Naive thymus-derived CD4-positive, alpha-beta T cell (primary cell): ENCODE measurements at regions of chr1 and their contacts with region 1.

Region 1: GRCh38 chr1:43974443-43975248 is at the start of gene ATP6V0B:
- DNase-seq: peak; percentile 83 to 98 (median 90)
- ATAC-seq: peak; percentile 85
- H3K4me3 ChIP-seq: peak within 1 kb of the TSS; percentile 93
- H3K4me3 Mint-ChIP-seq: peak within 1 kb of the TSS; percentile 88 to 98 (median 94)
- H3K27ac ChIP-seq: peak within 1 kb of the TSS; percentile 91
- H3K27ac Mint-ChIP-seq: peak within 1 kb of the TSS; percentile 90 to 99 (median 94)
- H3K4me1 ChIP-seq: peaks cover 27 to 29% of the 10 kb centered on the region in 2 donors
- H3K4me1 Mint-ChIP-seq: peaks cover 51 to 69% (median 58%) of the 10 kb centered on the region in 7 donors
- H3K27me3 ChIP-seq: no peaks in the 10 kb centered on the region
- H3K27me3 Mint-ChIP-seq: peaks cover 0 to 5% (median 0%) of the 10 kb centered on the region in 5 donors
- total RNA-seq, gene ATP6V0B: 47.3 to 152 (median 69.3) TPM

Region 2: GRCh38 chr1:42766741-42767509 is 1207.7 kb before region 1 on chr1 and contains the starts of genes C1orf50 and P3H1:
- CTCF ChIA-PET with region 1: no interaction called
- POLR2A ChIA-PET with region 1: no interaction called
- intact Hi-C with region 1: loop called in 1 of 2 experiments (anchors 1 kb)
- DNase-seq: peak; percentile 98 to 100 (median 100)
- ATAC-seq: peak; percentile 96
- H3K4me3 ChIP-seq: peak within 1 kb of the TSS; percentile 91
- H3K4me3 Mint-ChIP-seq: peak within 1 kb of the TSS in 1 of 10 donors; percentile 92
- H3K27ac ChIP-seq: peak within 1 kb of the TSS; percentile 84
- H3K27ac Mint-ChIP-seq: peak within 1 kb of the TSS in 8 of 9 donors; percentile 70 to 96 (median 92)
- H3K4me1 ChIP-seq: peaks cover 25 to 35% of the 10 kb centered on the region in 2 donors
- H3K4me1 Mint-ChIP-seq: peaks cover 20 to 50% (median 32%) of the 10 kb centered on the region in 7 donors
- H3K27me3 ChIP-seq: no peaks in the 10 kb centered on the region
- H3K27me3 Mint-ChIP-seq: no peaks in the 10 kb centered on the region
- total RNA-seq, gene C1orf50: 7.0 to 20.8 (median 18.1) TPM
- total RNA-seq, gene P3H1: 32.5 to 61.8 (median 47.3) TPM

Region 3: GRCh38 chr1:43367904-43368645 is 606.6 kb before region 1 on chr1 and contains the start of gene ELOVL1:
- CTCF ChIA-PET with region 1: no interaction called
- POLR2A ChIA-PET with region 1: no interaction called
- intact Hi-C with region 1: loop called in 1 of 2 experiments (anchors 10 kb)
- DNase-seq: peak; percentile 40 to 94 (median 58)
- ATAC-seq: peak; percentile 91
- H3K4me3 ChIP-seq: peak within 1 kb of the TSS; percentile 89
- H3K4me3 Mint-ChIP-seq: peak within 1 kb of the TSS; percentile 86 to 97 (median 92)
- H3K27ac ChIP-seq: peak within 1 kb of the TSS; percentile 90
- H3K27ac Mint-ChIP-seq: peak within 1 kb of the TSS; percentile 88 to 95 (median 91)
- H3K4me1 ChIP-seq: peaks cover 13 to 22% of the 10 kb centered on the region in 2 donors
- H3K4me1 Mint-ChIP-seq: peaks cover 24 to 47% (median 42%) of the 10 kb centered on the region in 7 donors
- H3K27me3 ChIP-seq: no peaks in the 10 kb centered on the region
- H3K27me3 Mint-ChIP-seq: no peaks in the 10 kb centered on the region
- total RNA-seq, gene ELOVL1: 25.9 to 65.3 (median 32.3) TPM

Region 4: DNA sequence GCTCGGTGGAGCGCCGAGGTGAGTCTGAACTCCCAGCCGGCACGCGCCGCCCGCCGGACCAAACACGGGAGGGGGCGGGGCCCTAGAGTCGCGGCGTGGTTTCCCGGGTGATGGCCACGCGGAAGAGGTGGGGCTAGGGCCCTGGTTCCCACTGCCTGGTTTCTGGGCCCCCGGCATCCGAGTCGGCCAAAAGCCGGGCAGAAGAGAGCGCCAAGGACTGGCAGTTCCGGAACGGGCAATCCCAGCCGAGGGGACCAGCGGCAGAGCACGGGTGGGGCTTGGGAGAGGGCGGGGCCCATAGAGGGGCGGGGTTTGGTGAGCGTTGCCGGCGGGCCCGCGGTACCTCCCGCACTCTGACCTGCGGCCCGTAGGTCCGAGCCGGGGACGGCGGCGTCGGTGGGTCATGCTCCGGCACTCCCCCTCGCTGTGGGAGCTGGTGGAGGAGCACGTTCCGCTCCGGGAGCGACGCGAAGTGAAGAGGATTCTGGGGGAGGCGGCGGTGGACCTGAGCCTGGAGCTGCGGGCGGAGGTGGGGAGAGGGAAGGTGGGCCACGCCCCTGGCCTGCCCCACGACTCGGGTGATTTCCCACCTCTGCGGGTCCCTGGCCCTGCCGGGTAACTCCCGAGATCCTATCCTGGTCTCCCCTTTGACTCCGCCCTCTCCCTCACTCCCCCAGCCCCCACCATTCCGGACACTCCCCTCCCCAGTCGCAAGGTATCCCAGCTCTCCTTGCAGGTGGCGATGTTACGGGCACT is 17.0 kb after region 1 on chr1 and contains the start of gene CCDC24:
- CTCF ChIA-PET with region 1: no interaction called
- POLR2A ChIA-PET with region 1: interaction called, 7 read pairs
- intact Hi-C with region 1: loop called (anchors 1 to 2 kb)
- DNase-seq: peak; percentile 38 to 81 (median 58)
- ATAC-seq: peak; percentile 91
- H3K4me3 ChIP-seq: peak within 1 kb of the TSS; percentile 79
- H3K4me3 Mint-ChIP-seq: peak within 1 kb of the TSS; percentile 83 to 95 (median 92)
- H3K27ac ChIP-seq: peak within 1 kb of the TSS; percentile 72
- H3K27ac Mint-ChIP-seq: peak within 1 kb of the TSS in 8 of 9 donors; percentile 43 to 91 (median 73)
- H3K4me1 ChIP-seq: peaks cover 0 to 11% of the 10 kb centered on the region in 2 donors
- H3K4me1 Mint-ChIP-seq: peaks cover 0 to 17% (median 9%) of the 10 kb centered on the region in 7 donors
- H3K27me3 ChIP-seq: no peaks in the 10 kb centered on the region
- H3K27me3 Mint-ChIP-seq: no peaks in the 10 kb centered on the region
- total RNA-seq, gene CCDC24: 0.40 to 2.9 (median 1.6) TPM

Region 5: DNA sequence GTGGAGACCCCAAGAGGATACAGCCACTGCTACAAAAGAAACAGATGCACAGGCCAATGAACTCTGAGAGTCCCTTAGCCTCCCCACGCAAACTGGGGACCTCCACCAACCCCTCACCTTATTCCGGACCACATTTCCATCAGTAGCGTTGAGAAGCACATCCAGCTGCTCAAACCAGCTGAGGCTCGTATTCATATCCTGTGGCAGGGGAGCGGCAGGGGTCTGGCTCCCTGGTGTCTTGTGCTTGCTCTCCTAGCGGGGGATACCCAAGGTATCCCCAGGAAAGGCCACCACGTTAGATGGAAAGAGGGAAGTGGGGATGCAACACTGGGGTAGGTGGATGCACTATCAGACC is 1524.7 kb after region 1 on chr1:
- CTCF ChIA-PET with region 1: no interaction called
- POLR2A ChIA-PET with region 1: no interaction called
- intact Hi-C with region 1: loop called in 1 of 2 experiments (anchors 5 kb)
- DNase-seq: peak in 1 of 9 donors; percentile 17
- ATAC-seq: no peak
- H3K4me3 ChIP-seq: peak overlapping the region; percentile 68
- H3K4me3 Mint-ChIP-seq: peak overlapping the region; percentile 91 to 99 (median 94)
- H3K27ac ChIP-seq: peak overlapping the region; percentile 70
- H3K27ac Mint-ChIP-seq: peak overlapping the region; percentile 87 to 97 (median 92)
- H3K4me1 ChIP-seq: peaks cover 5 to 17% of the 10 kb centered on the region in 2 donors
- H3K4me1 Mint-ChIP-seq: peaks cover 24 to 38% (median 33%) of the 10 kb centered on the region in 7 donors
- H3K27me3 ChIP-seq: no peaks in the 10 kb centered on the region
- H3K27me3 Mint-ChIP-seq: no peaks in the 10 kb centered on the region